Caco-2 (cell line): ENCODE measurements at regions of chr5 and their contacts with region 1.

Region 1: DNA sequence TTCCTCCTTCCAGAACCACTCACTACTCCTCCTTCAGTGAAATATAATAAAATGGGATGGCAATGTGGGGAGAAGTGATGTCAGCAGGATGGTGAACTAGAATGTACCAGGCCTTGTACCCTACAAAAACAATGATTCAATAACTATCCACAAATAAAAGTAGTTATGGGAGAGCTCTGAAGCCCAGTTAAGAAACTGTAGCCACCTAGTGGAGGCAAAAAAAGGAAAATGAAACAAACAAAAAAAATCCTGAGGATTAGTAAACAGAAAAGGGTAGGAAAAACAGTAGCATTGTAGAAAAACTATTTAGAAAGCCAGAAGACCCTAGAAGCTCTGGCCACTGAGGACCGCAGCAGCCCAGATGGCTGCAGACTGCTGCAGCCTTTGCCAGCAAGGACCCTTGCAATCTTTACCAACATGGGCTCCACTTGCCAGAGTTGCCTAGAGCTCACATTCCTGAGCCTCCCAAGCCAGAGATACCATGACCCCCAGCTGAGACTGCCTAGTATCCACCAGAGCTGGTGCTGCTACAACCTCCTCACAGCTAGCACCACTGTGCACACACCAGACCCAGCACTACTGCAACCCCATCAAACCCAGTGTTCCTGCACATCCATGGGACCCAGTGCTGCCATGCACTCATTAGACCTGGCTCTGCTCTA is 259.7 kb upstream of the MSX2 start:
- DNase-seq: no peak
- H3K4me3 ChIP-seq: no peak overlapping the region
- H3K4me3 Mint-ChIP-seq: no peak overlapping the region
- H3K27ac Mint-ChIP-seq: no peak overlapping the region
- H3K4me1 ChIP-seq: peaks cover 44% of the 10 kb centered on the region
- H3K4me1 Mint-ChIP-seq: peaks cover 35% of the 10 kb centered on the region
- H3K27me3 ChIP-seq: no peaks in the 10 kb centered on the region
- H3K27me3 Mint-ChIP-seq: no peaks in the 10 kb centered on the region
- CTCF ChIP-seq: peak; percentile 32 to 51

Region 2: DNA sequence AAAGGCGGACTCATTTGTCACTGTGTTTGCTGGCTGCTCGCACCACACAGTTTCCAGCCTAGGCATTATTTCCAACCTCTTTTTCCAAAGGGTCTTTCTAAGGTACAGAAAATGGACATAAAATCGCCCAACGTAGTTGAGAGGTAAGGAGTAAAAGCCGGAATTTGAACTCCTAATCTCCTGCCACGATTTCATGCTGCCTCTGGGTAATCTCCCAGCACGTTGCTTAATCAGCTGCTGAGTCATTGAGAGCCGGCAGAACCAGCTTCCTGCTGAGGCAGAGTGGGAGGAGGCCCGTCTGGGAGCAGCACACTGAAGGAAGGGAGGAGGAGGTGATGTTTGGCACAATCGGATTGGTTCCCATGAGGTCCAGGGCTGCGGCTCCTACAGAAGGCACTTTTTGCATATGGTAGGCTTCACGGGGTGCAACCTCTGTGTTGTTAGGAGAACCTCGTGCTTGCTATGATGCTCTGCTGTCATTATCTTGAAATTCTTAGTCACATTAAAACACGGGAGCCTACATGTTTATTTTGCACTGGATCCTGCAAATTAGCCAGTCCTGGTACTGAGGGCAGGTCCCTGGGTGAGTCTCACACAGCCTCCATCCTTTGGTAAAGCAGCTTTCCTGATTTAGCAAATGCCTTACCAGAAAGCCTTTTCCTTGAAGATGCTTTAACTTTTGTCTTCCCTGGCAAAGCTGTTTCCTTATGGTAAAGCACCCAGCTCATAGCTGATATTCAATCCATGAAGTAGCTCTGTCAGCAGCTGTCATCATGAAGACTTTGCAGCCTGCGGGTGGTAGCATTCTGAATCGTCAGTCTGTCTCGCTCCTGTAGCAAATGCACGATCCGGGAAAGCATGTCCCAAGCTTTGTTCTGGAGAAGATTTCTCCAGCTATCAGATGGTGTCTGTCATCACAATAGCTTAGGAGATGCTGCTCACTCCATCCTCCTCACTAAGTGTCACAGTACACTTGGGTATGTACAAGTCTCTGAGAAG is 68.1 kb after region 1 on chr5:
- CTCF ChIA-PET with region 1: no interaction called
- POLR2A ChIA-PET with region 1: no interaction called
- intact Hi-C with region 1: loop called (anchors 1 kb)
- DNase-seq: peak; percentile 92 to 96
- H3K4me3 ChIP-seq: no peak overlapping the region
- H3K4me3 Mint-ChIP-seq: peak overlapping the region; percentile 63
- H3K27ac Mint-ChIP-seq: peak overlapping the region; percentile 39
- H3K4me1 ChIP-seq: peaks cover 65% of the 10 kb centered on the region
- H3K4me1 Mint-ChIP-seq: peaks cover 58% of the 10 kb centered on the region
- H3K27me3 ChIP-seq: no peaks in the 10 kb centered on the region
- H3K27me3 Mint-ChIP-seq: no peaks in the 10 kb centered on the region
- CTCF ChIP-seq: no peak

Region 3: GRCh38 chr5:174625591-174626350 is 161.1 kb after region 1 on chr5:
- CTCF ChIA-PET with region 1: no interaction called
- POLR2A ChIA-PET with region 1: no interaction called
- intact Hi-C with region 1: no loop called
- DNase-seq: no peak
- H3K4me3 ChIP-seq: no peak overlapping the region
- H3K4me3 Mint-ChIP-seq: no peak overlapping the region
- H3K27ac Mint-ChIP-seq: peak overlapping the region; percentile 41
- H3K4me1 ChIP-seq: peaks cover 51% of the 10 kb centered on the region
- H3K4me1 Mint-ChIP-seq: peaks cover 49% of the 10 kb centered on the region
- H3K27me3 ChIP-seq: no peaks in the 10 kb centered on the region
- H3K27me3 Mint-ChIP-seq: no peaks in the 10 kb centered on the region
- CTCF ChIP-seq: no peak